ENCODE measurements at regions of chr4 and their contacts with region 1.

Region 1: DNA sequence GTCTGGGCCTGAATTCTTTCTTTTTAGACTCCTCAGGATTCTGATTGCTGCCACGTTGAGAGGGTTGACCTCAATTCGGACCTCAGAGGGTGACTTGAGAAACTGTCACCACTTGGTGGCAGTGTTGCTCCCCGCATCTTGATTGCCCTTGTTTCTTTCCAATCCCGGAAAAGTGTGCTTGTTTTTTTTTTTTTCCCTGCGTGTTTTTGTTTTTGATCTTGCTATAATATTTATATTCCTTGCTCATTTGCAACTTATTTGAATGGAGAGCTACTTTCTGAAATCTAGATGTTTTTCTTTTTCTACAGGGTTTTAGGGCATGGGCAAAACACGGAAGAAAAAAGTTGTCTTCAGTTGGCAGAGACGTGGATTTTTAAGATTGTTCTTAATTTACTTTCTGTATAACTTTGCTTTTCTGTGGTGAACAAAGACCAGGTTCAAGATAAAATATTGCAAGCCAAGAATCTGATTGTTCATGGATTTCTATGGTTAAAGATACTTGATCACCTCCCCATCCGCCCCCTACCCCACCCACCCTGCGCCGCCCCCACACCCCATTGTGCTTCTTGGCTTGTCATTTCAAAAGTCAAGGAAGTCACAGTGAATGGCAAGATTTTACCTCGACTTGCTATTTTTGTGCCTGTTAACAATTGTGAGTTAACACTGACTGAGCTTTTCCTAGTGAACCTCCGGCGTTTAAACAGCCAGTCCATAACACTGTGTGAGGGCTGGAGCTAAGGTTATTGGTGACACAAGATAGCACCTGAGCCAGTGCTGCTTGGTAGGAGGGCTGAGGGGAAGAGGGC is 102.1 kb downstream of the PTTG2 start:
- DNase-seq: peak; percentile 76 to 79
- ATAC-seq: peak; percentile 70 to 90 (median 80)
- H3K4me3 ChIP-seq: peak overlapping the region; percentile 39
- H3K27ac ChIP-seq: no peak overlapping the region
- H3K4me1 ChIP-seq: no peaks in the 10 kb centered on the region
- H3K27me3 ChIP-seq: no peaks in the 10 kb centered on the region
- CTCF ChIP-seq: peak; percentile 86

Region 2: GRCh38 chr4:38675146-38676121 is 613.1 kb after region 1 on chr4:
- intact Hi-C with region 1: loop called (anchors 5 to 10 kb)
- DNase-seq: peak; percentile 62 to 67
- ATAC-seq: peak; percentile 65 to 85 (median 72)
- H3K4me3 ChIP-seq: peak overlapping the region; percentile 29
- H3K27ac ChIP-seq: peak overlapping the region; percentile 54
- H3K4me1 ChIP-seq: peaks cover 87% of the 10 kb centered on the region
- H3K27me3 ChIP-seq: no peaks in the 10 kb centered on the region
- CTCF ChIP-seq: peak; percentile 96

Region 3: GRCh38 chr4:38730830-38731646 is 668.7 kb after region 1 on chr4:
- intact Hi-C with region 1: loop called in 1 of 2 experiments (anchors 2 kb)
- DNase-seq: peak; percentile 80 to 87
- ATAC-seq: peak; percentile 77 to 87 (median 83)
- H3K4me3 ChIP-seq: no peak overlapping the region
- H3K27ac ChIP-seq: no peak overlapping the region
- H3K4me1 ChIP-seq: no peaks in the 10 kb centered on the region
- H3K27me3 ChIP-seq: no peaks in the 10 kb centered on the region
- CTCF ChIP-seq: peak; percentile 96

Region 4: GRCh38 chr4:38782452-38783108 is 720.3 kb after region 1 on chr4 and contains the start of gene TLR10:
- intact Hi-C with region 1: loop called in 1 of 2 experiments (anchors 5 kb)
- DNase-seq: no peak
- ATAC-seq: peak; percentile 48 to 81 (median 68)
- H3K4me3 ChIP-seq: no peak within 1 kb of the TSS
- H3K27ac ChIP-seq: no peak within 1 kb of the TSS
- H3K4me1 ChIP-seq: no peaks in the 10 kb centered on the region
- H3K27me3 ChIP-seq: no peaks in the 10 kb centered on the region
- CTCF ChIP-seq: peak; percentile 68
- total RNA-seq, gene TLR10: 0.11 to 0.17 (median 0.15) TPM in 3 of 4 donors, not detected in the other

Region 5: DNA sequence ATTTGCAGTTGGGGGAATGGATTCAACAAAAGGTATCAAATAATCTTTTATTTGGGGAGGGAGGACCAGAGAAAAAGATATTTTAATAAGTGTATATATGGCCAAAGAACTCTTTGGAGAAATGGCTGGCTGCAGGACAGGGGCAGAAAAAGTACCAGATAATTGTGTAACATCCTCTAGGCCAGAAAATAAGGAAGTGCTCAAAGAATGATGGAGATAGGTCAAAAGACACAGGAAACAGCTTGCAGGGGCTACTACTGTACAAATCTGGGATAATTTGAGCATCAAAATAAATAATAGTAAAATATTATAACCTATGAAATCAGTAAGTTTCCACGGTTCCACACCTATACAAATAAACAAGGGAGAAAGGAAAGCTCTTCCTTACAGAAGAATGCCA is 1034.6 kb after region 1 on chr4:
- intact Hi-C with region 1: no loop called
- DNase-seq: no peak
- ATAC-seq: no peak
- H3K4me3 ChIP-seq: no peak overlapping the region
- H3K27ac ChIP-seq: no peak overlapping the region
- H3K4me1 ChIP-seq: no peaks in the 10 kb centered on the region
- H3K27me3 ChIP-seq: no peaks in the 10 kb centered on the region
- CTCF ChIP-seq: no peak

Measured in psoas muscle (tissue), 8 donors.